GM12878 (cell line): ENCODE measurements at regions of chr11 and their contacts with region 1.

Region 1: GRCh38 chr11:122754553-122755322 is 83.6 kb upstream of the CRTAM start:
- DNase-seq: no peak
- ATAC-seq: peak; percentile 87
- H3K4me3 ChIP-seq: no peak overlapping the region
- H3K27ac ChIP-seq: no peak overlapping the region
- H3K4me1 ChIP-seq: 0 out of 2 replicates have a peak, but pooled peaks cover 3% of the 10 kb centered on the region
- H3K27me3 ChIP-seq: no peaks in the 10 kb centered on the region; a peak in 2 of 4 replicates
- CTCF ChIP-seq: peak; percentile 47 to 66 (median 58); a peak in 5 of 6 replicates
- EP300 ChIP-seq: no peak
- POLR2A ChIP-seq: no peak
- RAD21 ChIP-seq: peak; percentile 74

Region 2: DNA sequence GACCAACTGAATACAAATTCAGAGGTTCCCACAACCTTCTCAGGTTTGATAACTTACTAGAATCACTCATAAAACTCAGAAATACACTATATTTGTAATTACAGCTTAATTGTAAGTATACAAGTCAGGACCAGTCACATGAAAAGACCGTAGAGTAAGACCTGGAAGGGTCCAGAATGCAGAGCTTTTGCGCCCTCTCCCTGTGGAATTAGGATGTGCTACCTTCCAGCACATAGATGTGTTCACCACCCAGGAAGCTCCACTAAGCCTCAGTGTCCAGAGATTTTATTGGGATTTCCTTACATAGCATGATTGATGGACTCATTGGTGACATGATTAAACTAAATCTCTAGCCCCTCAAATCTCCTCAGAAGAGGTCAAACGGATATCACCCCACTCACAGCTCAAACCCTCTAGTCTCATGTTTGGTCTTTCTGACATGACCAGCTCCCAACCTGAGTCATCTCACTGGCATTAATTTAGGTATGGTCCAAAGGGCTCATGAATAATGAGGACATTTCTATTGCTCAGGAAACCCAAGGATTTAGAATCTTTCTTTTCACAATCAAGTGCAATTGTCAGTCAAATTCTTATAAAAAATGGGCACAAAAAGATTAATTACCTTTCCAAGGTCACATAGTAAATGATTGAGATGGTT is 176.4 kb before region 1 on chr11:
- CTCF ChIA-PET with region 1: interaction called, 14 read pairs
- POLR2A ChIA-PET with region 1: no interaction called
- RAD21 ChIA-PET with region 1: interaction called, 4 read pairs
- SMC1A ChIA-PET with region 1: interaction called, 4 read pairs
- in situ Hi-C with region 1: no loop called
- intact Hi-C with region 1: loop called (anchors 1 kb)
- DNase-seq: no peak
- ATAC-seq: no peak
- H3K4me3 ChIP-seq: no peak overlapping the region
- H3K27ac ChIP-seq: no peak overlapping the region
- H3K4me1 ChIP-seq: no peaks in the 10 kb centered on the region
- H3K27me3 ChIP-seq: no peaks in the 10 kb centered on the region
- CTCF ChIP-seq: peak in 1 of 3 experiments; percentile 16; a peak in 1 of 6 replicates
- EP300 ChIP-seq: no peak
- POLR2A ChIP-seq: no peak
- RAD21 ChIP-seq: no peak

Region 3: DNA sequence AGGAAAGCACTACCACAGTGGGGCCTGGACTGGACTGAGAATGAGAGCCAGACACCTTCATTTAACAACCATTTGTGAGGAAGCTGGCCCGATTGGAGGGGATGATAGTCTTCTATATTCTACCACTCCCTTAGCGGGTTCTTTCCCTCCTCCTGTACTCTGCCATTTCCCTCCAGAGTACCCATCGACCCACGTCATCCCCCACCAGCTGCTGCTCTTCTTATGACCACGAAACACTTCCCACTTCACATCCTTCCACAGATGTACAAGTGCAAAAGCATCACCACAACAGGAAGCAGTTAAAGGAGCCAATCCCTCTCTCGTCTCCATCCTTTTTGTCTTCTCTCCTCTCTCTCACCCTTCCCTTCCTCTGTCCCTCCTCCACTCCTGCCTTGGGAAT is 117.2 kb before region 1 on chr11:
- CTCF ChIA-PET with region 1: interaction called, 40 read pairs
- POLR2A ChIA-PET with region 1: no interaction called
- RAD21 ChIA-PET with region 1: interaction called, 5 read pairs
- SMC1A ChIA-PET with region 1: interaction called, 14 read pairs
- in situ Hi-C with region 1: loop called (anchors 5 kb)
- intact Hi-C with region 1: loop called (anchors 1 kb)
- DNase-seq: no peak
- ATAC-seq: no peak
- H3K4me3 ChIP-seq: no peak overlapping the region
- H3K27ac ChIP-seq: no peak overlapping the region
- H3K4me1 ChIP-seq: no peaks in the 10 kb centered on the region
- H3K27me3 ChIP-seq: peaks cover 2 to 4% of the 10 kb centered on the region in 2 experiments; a peak in 3 of 4 replicates
- CTCF ChIP-seq: no peak
- EP300 ChIP-seq: no peak
- POLR2A ChIP-seq: no peak
- RAD21 ChIP-seq: no peak

Region 4: DNA sequence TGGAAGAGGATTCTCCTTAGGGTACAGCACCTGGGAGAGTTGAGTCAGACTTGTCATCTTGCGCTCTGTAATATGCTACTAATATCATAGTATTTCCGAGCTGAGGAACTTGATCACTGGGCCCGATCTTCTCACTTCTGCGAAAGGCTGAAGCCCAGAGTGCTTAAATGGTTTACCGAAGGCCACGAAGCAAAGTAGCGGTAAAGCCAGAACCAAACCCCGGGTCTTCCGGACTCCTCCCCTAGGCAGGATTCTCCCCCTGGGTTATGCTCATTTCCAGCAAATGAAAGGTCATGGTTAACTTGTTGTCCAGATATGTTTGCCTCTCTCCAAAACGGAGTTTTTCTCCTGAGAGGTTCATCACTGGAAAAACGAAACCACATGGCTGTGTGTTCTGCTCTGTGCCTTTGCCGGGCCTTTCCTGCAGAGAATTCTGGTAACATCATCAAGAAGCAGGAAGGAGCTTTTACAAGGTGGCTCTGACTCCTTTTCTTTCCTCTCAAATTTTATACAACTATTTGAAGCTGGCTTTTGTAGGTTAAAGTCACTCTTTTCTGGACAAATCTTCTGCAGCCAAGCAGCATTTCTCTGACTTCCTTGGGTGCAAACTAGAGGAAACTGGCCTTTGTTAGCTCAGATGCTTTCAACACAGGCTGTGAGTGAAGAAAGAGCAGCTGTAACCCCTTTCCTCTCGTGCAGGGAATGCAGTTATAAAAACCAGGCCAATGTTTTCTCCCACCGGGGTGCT is 63.8 kb before region 1 on chr11:
- CTCF ChIA-PET with region 1: interaction called, 10 read pairs
- POLR2A ChIA-PET with region 1: no interaction called
- RAD21 ChIA-PET with region 1: interaction called, 3 read pairs
- SMC1A ChIA-PET with region 1: no interaction called
- in situ Hi-C with region 1: no loop called
- intact Hi-C with region 1: no loop called
- DNase-seq: no peak
- ATAC-seq: no peak
- H3K4me3 ChIP-seq: no peak overlapping the region
- H3K27ac ChIP-seq: no peak overlapping the region
- H3K4me1 ChIP-seq: no peaks in the 10 kb centered on the region
- H3K27me3 ChIP-seq: peaks cover under 1 to 1% of the 10 kb centered on the region in 2 experiments; a peak in 2 of 4 replicates
- CTCF ChIP-seq: no peak
- EP300 ChIP-seq: no peak
- POLR2A ChIP-seq: no peak
- RAD21 ChIP-seq: no peak

Region 5: DNA sequence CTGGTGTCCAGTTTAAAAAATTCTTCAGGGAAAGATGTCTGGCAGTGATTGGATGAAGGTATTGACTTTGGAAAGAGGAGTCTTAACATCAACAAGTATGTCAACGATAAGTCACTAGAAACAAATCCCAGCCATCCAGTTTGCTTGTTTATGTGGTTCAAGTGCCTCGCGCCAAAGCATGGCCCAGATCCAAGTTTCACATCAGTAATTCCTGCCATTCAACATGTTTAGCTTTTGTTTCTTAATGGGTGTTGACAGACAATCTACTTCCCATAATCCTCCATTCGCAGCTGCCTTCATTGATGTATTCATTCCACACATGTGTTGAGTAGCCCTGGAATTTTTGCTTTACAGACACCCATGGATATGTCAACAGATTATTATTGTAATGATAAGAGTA is 21.4 kb before region 1 on chr11:
- CTCF ChIA-PET with region 1: interaction called, 12 read pairs
- POLR2A ChIA-PET with region 1: no interaction called
- RAD21 ChIA-PET with region 1: no interaction called
- SMC1A ChIA-PET with region 1: interaction called, 3 read pairs
- in situ Hi-C with region 1: no loop called
- intact Hi-C with region 1: no loop called
- DNase-seq: no peak
- ATAC-seq: no peak
- H3K4me3 ChIP-seq: no peak overlapping the region
- H3K27ac ChIP-seq: no peak overlapping the region
- H3K4me1 ChIP-seq: 0 out of 2 replicates have a peak, but pooled peaks cover 2% of the 10 kb centered on the region
- H3K27me3 ChIP-seq: peaks cover 0 to under 1% of the 10 kb centered on the region in 2 experiments; a peak in 2 of 4 replicates
- CTCF ChIP-seq: no peak
- EP300 ChIP-seq: no peak
- POLR2A ChIP-seq: no peak
- RAD21 ChIP-seq: no peak

Region 6: DNA sequence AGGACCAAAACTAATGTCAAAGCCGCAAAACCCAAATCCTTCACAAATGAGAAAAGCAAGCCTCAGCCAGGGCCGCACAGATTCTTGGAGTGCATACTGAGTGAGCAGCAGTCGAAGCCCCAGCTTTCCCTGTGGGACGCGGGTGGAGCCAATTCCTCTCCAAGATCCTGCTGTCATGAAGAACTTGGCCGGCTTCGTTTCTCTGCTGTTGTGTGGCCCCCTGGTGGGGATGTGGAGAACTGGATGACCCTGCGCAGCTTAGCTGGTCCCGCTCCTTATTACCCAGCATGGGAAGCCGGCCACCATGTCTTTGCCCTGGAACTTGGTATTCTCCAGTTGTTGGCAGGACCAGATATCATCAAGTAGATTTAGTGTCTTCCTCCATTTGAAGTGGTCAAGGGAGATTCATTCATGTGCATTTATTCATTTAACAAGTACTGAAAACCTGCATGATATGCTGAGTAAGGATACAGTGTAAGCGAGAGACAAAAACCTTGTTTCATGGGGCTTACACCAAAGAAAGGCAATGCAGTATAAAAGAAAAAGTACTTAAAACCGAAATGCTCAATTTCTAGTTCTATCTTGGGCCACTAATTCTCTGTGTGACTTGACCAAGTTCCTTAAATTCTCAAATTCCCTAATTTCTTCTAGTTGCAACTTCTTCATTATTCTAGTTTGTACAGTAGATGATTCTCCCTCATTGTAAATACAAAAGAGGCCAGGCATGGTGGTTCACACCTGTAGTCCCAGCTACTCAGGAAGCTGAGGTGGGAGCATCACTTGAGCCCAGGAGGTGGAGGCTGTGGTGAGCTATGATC is 26.8 kb after region 1 on chr11:
- CTCF ChIA-PET with region 1: interaction called, 28 read pairs
- POLR2A ChIA-PET with region 1: no interaction called
- RAD21 ChIA-PET with region 1: interaction called, 3 read pairs
- SMC1A ChIA-PET with region 1: interaction called, 16 read pairs
- in situ Hi-C with region 1: no loop called
- intact Hi-C with region 1: no loop called
- DNase-seq: no peak
- ATAC-seq: peak; percentile 96
- H3K4me3 ChIP-seq: no peak overlapping the region
- H3K27ac ChIP-seq: no peak overlapping the region
- H3K4me1 ChIP-seq: no peaks in the 10 kb centered on the region
- H3K27me3 ChIP-seq: no peaks in the 10 kb centered on the region; a peak in 1 of 4 replicates
- CTCF ChIP-seq: peak; percentile 84 to 91 (median 85)
- EP300 ChIP-seq: no peak
- POLR2A ChIP-seq: no peak
- RAD21 ChIP-seq: peak; percentile 87